Astrocyte of the cerebellum (primary cell): ENCODE measurements at regions of chr11 and their contacts with region 1.

Region 1: GRCh38 chr11:16809886-16810668 is 71.6 kb downstream of the C11orf58 start:
- DNase-seq: peak; percentile 43
- H3K4me3 ChIP-seq: no peak overlapping the region
- CTCF ChIP-seq: no peak

Region 2: DNA sequence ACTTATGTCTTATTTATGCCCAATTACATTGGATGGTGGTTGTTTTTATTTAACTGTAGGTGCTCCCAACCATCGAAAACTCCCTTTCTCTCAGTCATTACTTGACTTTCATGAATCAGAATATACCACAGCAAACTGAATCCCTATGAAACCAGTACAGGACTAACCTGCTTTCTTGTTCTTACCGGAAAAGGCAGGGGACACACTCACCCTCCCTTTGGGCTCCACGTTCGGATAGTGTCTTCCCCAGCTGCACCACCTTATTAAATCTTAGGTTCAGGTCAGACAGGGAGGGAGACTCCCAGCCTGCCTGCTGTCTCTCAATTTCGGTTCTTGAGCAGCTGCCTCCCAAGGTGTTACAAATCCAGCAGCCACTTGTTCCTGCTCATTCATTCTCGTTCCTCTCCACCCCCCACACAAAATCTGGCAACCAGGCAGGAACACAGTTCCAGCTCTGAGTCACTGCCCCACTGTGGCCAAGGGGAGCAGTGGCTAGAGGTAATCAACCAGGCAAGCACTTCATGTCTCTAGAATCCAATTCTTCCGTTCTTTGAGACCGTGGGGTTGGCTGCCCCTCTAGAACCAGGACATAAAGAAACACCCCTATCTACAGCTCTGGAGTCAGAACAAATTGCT is 71.1 kb after region 1 on chr11:
- in situ Hi-C with region 1: no loop called
- DNase-seq: peak; percentile 55
- H3K4me3 ChIP-seq: no peak overlapping the region
- CTCF ChIP-seq: peak; percentile 65

Region 3: GRCh38 chr11:17077520-17078401 is 267.7 kb after region 1 on chr11 and contains the start of gene RPS13:
- in situ Hi-C with region 1: loop called (anchors 5 kb)
- DNase-seq: peak; percentile 97
- H3K4me3 ChIP-seq: peak within 1 kb of the TSS; percentile 100
- CTCF ChIP-seq: no peak